Natural killer cell (primary cell): ENCODE measurements at regions of chr9 and their contacts with region 1.

Region 1: DNA sequence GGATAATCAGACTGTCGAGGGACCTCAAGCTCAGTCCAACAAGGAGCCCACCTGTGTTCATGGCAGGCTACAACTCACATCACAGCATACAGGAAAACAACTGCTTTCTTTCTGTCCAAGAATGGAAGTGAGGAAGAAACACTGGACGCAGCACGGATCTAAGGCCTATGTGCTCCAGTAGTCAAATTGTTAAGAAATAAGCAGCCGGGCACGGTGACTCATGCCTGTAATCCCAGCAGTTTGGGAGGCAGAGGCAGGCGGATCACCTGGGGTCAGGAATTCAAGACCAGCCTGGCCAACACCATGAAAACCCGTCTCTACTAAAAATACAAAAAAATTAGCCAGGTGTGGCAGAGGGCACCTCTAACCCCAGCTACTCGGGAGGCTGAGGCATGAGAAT is 427.8 kb downstream of the BNC2 start:
- DNase-seq: no peak
- ATAC-seq: no peak
- H3K4me3 ChIP-seq: no peak overlapping the region
- H3K4me3 Mint-ChIP-seq: no peak overlapping the region
- H3K27ac ChIP-seq: no peak overlapping the region
- H3K27ac Mint-ChIP-seq: no peak overlapping the region
- H3K4me1 ChIP-seq: no peaks in the 10 kb centered on the region
- H3K4me1 Mint-ChIP-seq: peaks cover 9 to 12% of the 10 kb centered on the region in 2 donors
- H3K27me3 ChIP-seq: no peaks in the 10 kb centered on the region
- H3K27me3 Mint-ChIP-seq: no peaks in the 10 kb centered on the region
- CTCF ChIP-seq: no peak

Region 2: DNA sequence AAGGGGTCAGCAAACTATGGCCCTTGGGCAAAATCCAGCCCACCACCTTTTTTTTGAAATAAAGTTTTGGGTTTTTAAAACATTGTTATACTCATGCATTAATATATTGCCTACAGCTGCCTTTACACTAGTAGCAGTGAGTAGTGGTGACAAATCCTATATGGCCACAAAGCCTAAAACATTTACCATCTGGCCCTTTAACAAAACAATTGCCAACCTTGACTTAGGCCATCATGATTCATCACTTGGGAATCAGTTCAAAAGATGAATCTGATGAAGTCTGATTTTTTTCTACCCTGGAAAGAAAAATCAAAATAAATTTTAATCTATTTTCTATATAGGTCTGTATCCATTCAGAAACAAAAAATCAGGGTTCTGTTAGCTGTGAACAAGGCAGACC is 57.0 kb before region 1 on chr9:
- intact Hi-C with region 1: loop called (anchors 10 kb)
- DNase-seq: no peak
- ATAC-seq: no peak
- H3K4me3 ChIP-seq: no peak overlapping the region
- H3K4me3 Mint-ChIP-seq: no peak overlapping the region
- H3K27ac ChIP-seq: no peak overlapping the region
- H3K27ac Mint-ChIP-seq: no peak overlapping the region
- H3K4me1 ChIP-seq: no peaks in the 10 kb centered on the region
- H3K4me1 Mint-ChIP-seq: no peaks in the 10 kb centered on the region
- H3K27me3 ChIP-seq: no peaks in the 10 kb centered on the region
- H3K27me3 Mint-ChIP-seq: peaks cover 9 to 10% of the 10 kb centered on the region in 2 donors
- CTCF ChIP-seq: no peak